ENCODE measurements at regions of chr4 and their contacts with region 1.

Region 1: GRCh38 chr4:140529434-140529833 is 5.5 kb downstream of the ELMOD2 start:
- DNase-seq: no peak
- ATAC-seq: peak; percentile 72

Region 2: DNA sequence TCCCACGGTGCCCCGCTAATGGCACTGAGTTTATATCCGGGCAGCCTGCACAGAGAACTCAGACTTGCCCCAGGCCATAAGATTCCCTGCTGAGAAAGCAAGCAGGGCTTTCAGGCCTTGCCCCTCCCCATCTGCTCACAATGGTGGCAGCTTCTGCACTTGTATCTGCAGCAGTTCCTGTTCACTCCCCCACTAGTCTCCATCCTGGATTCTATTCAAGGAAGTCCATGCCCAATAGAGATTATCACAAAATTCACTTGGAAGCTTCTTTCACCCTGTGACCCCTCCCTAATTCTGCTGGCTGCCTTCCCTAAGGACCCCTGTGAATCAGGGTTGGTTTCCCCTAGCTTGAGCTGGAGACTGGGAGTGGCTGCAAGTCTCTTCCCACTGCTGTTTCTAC is 73.8 kb after region 1 on chr4:
- intact Hi-C with region 1: loop called (anchors 5 kb)
- DNase-seq: no peak
- ATAC-seq: peak; percentile 45